ENCODE measurements at regions of chr15 and their contacts with region 1.

Region 1: GRCh38 chr15:40647523-40647922 is 47.5 kb upstream of the RAD51 start:
- DNase-seq: no peak
- ATAC-seq: no peak
- H3K4me3 ChIP-seq: no peak overlapping the region
- H3K4me3 Mint-ChIP-seq: no peak overlapping the region
- H3K27ac ChIP-seq: no peak overlapping the region
- H3K27ac Mint-ChIP-seq: no peak overlapping the region
- H3K4me1 ChIP-seq: no peaks in the 10 kb centered on the region
- H3K4me1 Mint-ChIP-seq: peaks cover 0 to 3% (median 0%) of the 10 kb centered on the region in 3 donors
- H3K27me3 ChIP-seq: no peaks in the 10 kb centered on the region
- H3K27me3 Mint-ChIP-seq: no peaks in the 10 kb centered on the region

Region 2: GRCh38 chr15:40388946-40389841 is 258.3 kb before region 1 on chr15:
- CTCF ChIA-PET with region 1: no interaction called
- POLR2A ChIA-PET with region 1: interaction called in 1 of 2 experiments, 11 read pairs
- DNase-seq: no peak
- ATAC-seq: no peak
- H3K4me3 ChIP-seq: no peak overlapping the region
- H3K4me3 Mint-ChIP-seq: no peak overlapping the region
- H3K27ac ChIP-seq: no peak overlapping the region
- H3K27ac Mint-ChIP-seq: no peak overlapping the region
- H3K4me1 ChIP-seq: no peaks in the 10 kb centered on the region
- H3K4me1 Mint-ChIP-seq: peaks cover 2 to 10% (median 8%) of the 10 kb centered on the region in 3 donors
- H3K27me3 ChIP-seq: no peaks in the 10 kb centered on the region
- H3K27me3 Mint-ChIP-seq: no peaks in the 10 kb centered on the region

Region 3: DNA sequence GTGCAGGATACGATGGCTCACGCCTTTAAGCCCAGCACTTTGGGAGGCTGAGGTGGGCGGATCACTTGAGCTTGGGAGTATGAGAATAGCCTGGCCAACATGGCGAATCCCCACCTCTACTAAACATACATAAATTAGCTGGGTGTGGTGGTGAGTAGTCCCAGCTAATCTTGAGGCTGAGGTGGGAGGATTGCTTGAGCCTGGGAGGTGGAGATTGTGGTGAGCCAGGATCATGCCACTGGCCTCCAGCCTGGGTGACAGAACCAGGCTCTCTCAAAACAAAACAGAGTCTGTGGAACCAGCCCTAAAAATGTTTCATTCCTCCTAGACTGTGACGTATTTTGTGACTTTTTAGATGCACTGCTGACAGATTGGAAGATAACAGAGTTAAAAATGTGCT is 13.2 kb after region 1 on chr15:
- CTCF ChIA-PET with region 1: no interaction called
- POLR2A ChIA-PET with region 1: interaction called in 1 of 2 experiments, 10 read pairs
- DNase-seq: no peak
- ATAC-seq: no peak
- H3K4me3 ChIP-seq: no peak overlapping the region
- H3K4me3 Mint-ChIP-seq: no peak overlapping the region
- H3K27ac ChIP-seq: no peak overlapping the region
- H3K27ac Mint-ChIP-seq: no peak overlapping the region
- H3K4me1 ChIP-seq: no peaks in the 10 kb centered on the region
- H3K4me1 Mint-ChIP-seq: no peaks in the 10 kb centered on the region
- H3K27me3 ChIP-seq: no peaks in the 10 kb centered on the region
- H3K27me3 Mint-ChIP-seq: no peaks in the 10 kb centered on the region

Region 4: GRCh38 chr15:40974879-40975278 is 327.4 kb after region 1 on chr15:
- CTCF ChIA-PET with region 1: no interaction called
- POLR2A ChIA-PET with region 1: no interaction called
- DNase-seq: no peak
- ATAC-seq: no peak
- H3K4me3 ChIP-seq: no peak overlapping the region
- H3K4me3 Mint-ChIP-seq: no peak overlapping the region
- H3K27ac ChIP-seq: no peak overlapping the region
- H3K27ac Mint-ChIP-seq: no peak overlapping the region
- H3K4me1 ChIP-seq: no peaks in the 10 kb centered on the region
- H3K4me1 Mint-ChIP-seq: peaks cover 0 to 11% (median 3%) of the 10 kb centered on the region in 3 donors
- H3K27me3 ChIP-seq: no peaks in the 10 kb centered on the region
- H3K27me3 Mint-ChIP-seq: no peaks in the 10 kb centered on the region

Measured in T-cell (primary cell).